ENCODE measurements at regions of chr2 and their contacts with region 1.

Region 1: GRCh38 chr2:177983183-177983788 is 89.3 kb downstream of the PDE11A start:
- DNase-seq: peak; percentile 42
- CTCF ChIP-seq: peak; percentile 82

Region 2: DNA sequence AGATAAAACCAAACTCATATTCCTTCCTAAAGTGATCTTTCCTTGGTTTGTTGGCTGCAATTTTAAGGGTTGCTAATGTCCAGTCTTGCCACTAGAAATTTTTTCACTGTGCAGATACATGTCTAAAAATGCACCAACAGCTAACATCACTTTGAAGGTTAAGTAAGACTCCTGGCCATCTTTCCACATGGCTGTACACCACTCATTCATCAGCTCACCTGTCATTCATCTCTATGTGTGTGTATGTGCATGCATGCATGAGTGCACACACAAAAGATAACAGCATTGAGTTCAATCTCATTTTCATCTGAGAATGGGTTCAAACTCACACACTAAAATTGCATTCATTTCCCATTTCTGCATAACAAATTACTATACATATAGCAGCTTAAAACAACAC is 114.5 kb before region 1 on chr2:
- CTCF ChIA-PET with region 1: no interaction called
- POLR2A ChIA-PET with region 1: no interaction called
- DNase-seq: no peak
- CTCF ChIP-seq: no peak

Region 3: GRCh38 chr2:177964892-177965291 is 18.4 kb before region 1 on chr2:
- CTCF ChIA-PET with region 1: interaction called, 13 read pairs
- POLR2A ChIA-PET with region 1: no interaction called
- DNase-seq: no peak
- CTCF ChIP-seq: no peak